Activated naive CD4-positive, alpha-beta T cell treated with anti-CD3 and anti-CD28 coated beads for 36 hours (primary cell): ENCODE measurements at regions of chr1 and their contacts with region 1.

Region 1: DNA sequence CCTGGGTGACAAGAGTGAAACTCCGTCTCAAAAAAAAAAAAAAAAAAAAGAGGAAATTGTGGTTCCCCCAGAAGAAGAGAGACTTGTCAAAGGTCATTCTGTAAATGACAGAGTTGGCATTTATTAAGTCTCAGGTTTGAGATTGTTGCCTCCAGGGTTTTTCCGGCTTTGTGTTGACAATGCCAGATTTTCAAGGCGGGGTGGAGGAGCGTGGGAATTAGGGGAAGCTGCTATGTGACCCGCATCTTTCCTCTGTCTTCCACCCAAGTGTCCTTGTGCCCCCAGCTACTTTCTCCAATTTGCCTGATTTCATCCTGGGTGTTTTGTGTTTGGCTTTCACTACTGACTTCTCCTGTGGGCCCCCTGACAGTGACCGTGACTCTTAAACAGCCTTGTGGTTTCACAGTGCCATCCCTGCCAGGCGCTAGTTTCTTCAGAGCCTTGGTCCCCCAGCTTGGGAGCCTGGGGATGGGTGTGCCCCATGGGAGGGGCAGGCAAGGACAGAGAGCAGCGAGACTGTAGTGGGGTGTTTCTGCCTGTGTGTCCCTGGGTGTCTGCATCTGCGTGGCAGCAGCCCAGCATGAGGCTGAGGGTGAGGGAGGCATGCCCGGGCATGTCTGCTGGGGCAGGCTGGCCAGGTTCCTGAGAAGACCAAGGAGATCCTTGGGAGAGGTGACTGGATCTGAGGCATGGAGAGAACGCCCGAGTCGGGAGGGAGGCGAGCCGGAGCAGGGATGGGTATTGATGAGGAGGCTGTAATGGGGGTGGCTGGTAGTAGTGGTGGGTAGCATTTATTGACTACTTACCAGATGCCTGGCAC is 46.3 kb downstream of the IER5 start:
- DNase-seq: peak; percentile 68
- H3K4me3 Mint-ChIP-seq: peak overlapping the region; percentile 25
- H3K27ac Mint-ChIP-seq: peak overlapping the region; percentile 90
- H3K4me1 Mint-ChIP-seq: peaks cover 39% of the 10 kb centered on the region
- H3K27me3 Mint-ChIP-seq: peaks cover 6% of the 10 kb centered on the region

Region 2: GRCh38 chr1:181099152-181100014 is 35.4 kb before region 1 on chr1:
- CTCF ChIA-PET with region 1: interaction called, 66 read pairs
- intact Hi-C with region 1: loop called (anchors 1 kb)
- DNase-seq: peak; percentile 80
- H3K4me3 Mint-ChIP-seq: peak overlapping the region; percentile 67
- H3K27ac Mint-ChIP-seq: peak overlapping the region; percentile 99
- H3K4me1 Mint-ChIP-seq: peaks cover 88% of the 10 kb centered on the region
- H3K27me3 Mint-ChIP-seq: no peaks in the 10 kb centered on the region

Region 3: DNA sequence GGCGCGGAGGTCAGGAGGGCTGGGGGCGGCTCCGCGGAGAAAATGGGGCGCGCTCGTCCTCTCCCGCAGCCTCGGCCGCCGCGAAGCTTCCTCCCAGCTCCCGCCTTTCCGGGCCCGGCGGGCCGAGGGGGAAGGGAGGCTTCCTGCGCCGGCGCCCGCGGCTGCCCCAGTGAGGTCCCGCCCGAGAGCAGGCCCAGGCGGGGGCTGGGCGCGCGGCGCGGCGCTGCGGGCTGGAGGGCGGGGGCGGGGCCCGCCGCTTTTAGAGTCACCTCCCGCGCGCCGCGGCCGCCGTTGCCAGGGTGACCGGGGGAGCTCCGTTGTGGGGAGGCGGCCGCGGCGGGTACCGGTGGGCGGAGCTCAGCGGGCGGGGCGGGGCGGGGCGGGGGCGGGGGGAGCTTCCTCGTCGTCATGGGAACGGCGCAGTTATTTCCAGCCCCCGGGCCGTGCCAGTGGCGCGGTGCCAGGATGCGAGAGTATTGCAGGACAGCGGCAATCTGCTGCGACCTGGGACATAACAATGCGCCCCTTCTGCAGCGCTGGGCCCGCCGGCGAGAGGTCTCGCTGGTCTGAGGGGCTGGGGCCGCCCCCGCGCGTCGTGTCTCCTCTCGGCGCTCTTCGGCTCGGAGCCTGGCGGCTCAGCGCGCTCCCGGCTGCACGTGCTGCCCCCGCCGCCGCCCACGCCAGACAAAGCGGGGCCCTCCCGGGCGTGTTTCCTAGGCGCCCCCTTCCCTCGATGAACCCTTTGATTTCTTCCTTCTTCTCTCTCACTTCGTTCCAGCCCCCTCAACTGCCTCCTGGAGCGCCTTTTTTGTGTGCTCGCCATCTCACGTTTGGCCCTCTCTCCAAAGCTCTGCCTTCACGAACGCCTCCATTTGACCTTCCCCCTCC is 29.4 kb before region 1 on chr1:
- CTCF ChIA-PET with region 1: interaction called, 54 read pairs
- intact Hi-C with region 1: loop called (anchors 1 kb)
- DNase-seq: peak; percentile 93
- H3K4me3 Mint-ChIP-seq: peak overlapping the region; percentile 80
- H3K27ac Mint-ChIP-seq: no peak overlapping the region
- H3K4me1 Mint-ChIP-seq: peaks cover 70% of the 10 kb centered on the region
- H3K27me3 Mint-ChIP-seq: peaks cover 11% of the 10 kb centered on the region

Region 4: DNA sequence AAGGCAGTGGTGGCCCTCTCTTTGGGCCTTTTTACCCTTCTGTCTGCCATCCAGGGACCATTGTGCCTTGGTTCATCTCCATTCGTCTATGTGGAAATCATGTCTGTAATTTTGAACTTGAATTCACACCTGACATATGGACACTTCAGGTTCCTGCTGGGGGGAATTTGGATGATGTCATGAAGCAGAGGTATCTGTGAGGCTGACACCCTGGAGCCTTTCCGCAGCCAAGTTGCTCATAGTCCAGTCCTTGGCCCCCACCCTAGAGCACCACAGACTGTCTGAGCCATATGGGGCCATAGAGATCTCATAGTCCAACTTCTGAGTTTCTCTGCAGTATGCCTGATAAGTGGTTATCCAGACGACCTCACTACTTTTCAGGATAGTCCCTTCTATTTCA is 200.9 kb after region 1 on chr1:
- CTCF ChIA-PET with region 1: no interaction called
- intact Hi-C with region 1: no loop called
- DNase-seq: no peak
- H3K4me3 Mint-ChIP-seq: no peak overlapping the region
- H3K27ac Mint-ChIP-seq: no peak overlapping the region
- H3K4me1 Mint-ChIP-seq: no peaks in the 10 kb centered on the region
- H3K27me3 Mint-ChIP-seq: no peaks in the 10 kb centered on the region